ENCODE measurements at regions of chr3 and their contacts with region 1.

Region 1: GRCh38 chr3:127762077-127762786 is 60.1 kb downstream of the MGLL start:
- DNase-seq: no peak
- ATAC-seq: peak; percentile 67
- H3K4me3 Mint-ChIP-seq: peak overlapping the region; percentile 74
- H3K27ac Mint-ChIP-seq: peak overlapping the region; percentile 76
- H3K4me1 Mint-ChIP-seq: peaks cover 47% of the 10 kb centered on the region
- H3K27me3 Mint-ChIP-seq: no peaks in the 10 kb centered on the region
- CTCF ChIP-seq: no peak

Region 2: GRCh38 chr3:127735767-127736704 is 26.2 kb before region 1 on chr3:
- CTCF ChIA-PET with region 1: interaction called, 3 read pairs
- POLR2A ChIA-PET with region 1: interaction called, 11 read pairs
- intact Hi-C with region 1: no loop called
- DNase-seq: no peak
- ATAC-seq: peak; percentile 91
- H3K4me3 Mint-ChIP-seq: peak overlapping the region; percentile 77
- H3K27ac Mint-ChIP-seq: peak overlapping the region; percentile 93
- H3K4me1 Mint-ChIP-seq: peaks cover 46% of the 10 kb centered on the region
- H3K27me3 Mint-ChIP-seq: no peaks in the 10 kb centered on the region
- CTCF ChIP-seq: no peak

Region 3: DNA sequence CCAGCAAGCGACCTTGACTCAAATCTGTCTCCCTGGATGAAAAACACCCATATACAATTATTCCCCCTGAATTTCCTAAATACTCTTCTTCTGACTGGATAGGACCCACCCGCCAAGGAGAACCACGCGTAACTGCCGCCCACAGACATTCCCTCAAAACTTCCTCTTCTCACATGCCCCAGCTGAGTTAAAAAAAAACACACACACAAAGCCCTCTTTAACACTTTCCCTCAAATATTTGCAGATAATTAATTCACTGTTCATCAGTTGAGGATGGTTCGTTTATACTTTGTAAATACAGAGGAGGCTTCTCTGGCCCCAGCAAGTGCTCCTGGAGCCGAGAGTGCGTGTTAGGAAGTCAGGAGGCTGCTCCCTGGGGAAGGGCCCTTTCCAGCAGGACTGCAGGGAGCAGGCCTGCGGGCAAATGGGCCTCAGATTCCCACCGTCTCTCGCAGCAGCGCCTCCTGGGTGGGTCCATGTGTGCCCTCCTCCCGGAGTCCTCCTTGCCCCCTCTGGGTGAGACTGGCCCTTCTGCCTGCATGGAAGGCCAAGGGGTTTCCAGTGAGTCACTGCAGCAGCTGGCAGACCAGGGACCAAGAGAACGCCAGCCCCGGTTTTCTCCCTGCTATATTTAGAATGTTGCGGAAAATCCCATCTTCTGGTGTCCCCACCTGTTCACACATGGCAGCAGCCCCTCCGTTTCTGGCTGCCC is 13.3 kb after region 1 on chr3:
- CTCF ChIA-PET with region 1: no interaction called
- POLR2A ChIA-PET with region 1: interaction called, 5 read pairs
- intact Hi-C with region 1: loop called (anchors 2 kb)
- DNase-seq: no peak
- ATAC-seq: peak; percentile 53
- H3K4me3 Mint-ChIP-seq: peak overlapping the region; percentile 73
- H3K27ac Mint-ChIP-seq: peak overlapping the region; percentile 60
- H3K4me1 Mint-ChIP-seq: peaks cover 47% of the 10 kb centered on the region
- H3K27me3 Mint-ChIP-seq: no peaks in the 10 kb centered on the region
- CTCF ChIP-seq: no peak

Region 4: GRCh38 chr3:127911421-127911931 is 149.2 kb after region 1 on chr3:
- CTCF ChIA-PET with region 1: no interaction called
- POLR2A ChIA-PET with region 1: no interaction called
- intact Hi-C with region 1: no loop called
- DNase-seq: no peak
- ATAC-seq: no peak
- H3K4me3 Mint-ChIP-seq: no peak overlapping the region
- H3K27ac Mint-ChIP-seq: no peak overlapping the region
- H3K4me1 Mint-ChIP-seq: peaks cover 9% of the 10 kb centered on the region
- H3K27me3 Mint-ChIP-seq: peaks cover 39% of the 10 kb centered on the region
- CTCF ChIP-seq: no peak

Measured in activated B cell treated with CpG ODN at 0.5 μM for 24 hours (primary cell).